CD8-positive, alpha-beta T cell (primary cell): ENCODE measurements at regions of chr6 and their contacts with region 1.

Region 1: GRCh38 chr6:70667711-70668498 is at the start of gene SMAP1:
- DNase-seq: peak; percentile 79 to 97 (median 93)
- ATAC-seq: peak; percentile 91
- H3K4me3 ChIP-seq: peak within 1 kb of the TSS; percentile 76 to 87
- H3K4me3 Mint-ChIP-seq: peak within 1 kb of the TSS; percentile 90
- H3K27ac ChIP-seq: peak within 1 kb of the TSS; percentile 53 to 75
- H3K27ac Mint-ChIP-seq: peak within 1 kb of the TSS; percentile 92
- H3K4me1 ChIP-seq: peaks cover 39% of the 10 kb centered on the region
- H3K4me1 Mint-ChIP-seq: peaks cover 53% of the 10 kb centered on the region
- H3K27me3 ChIP-seq: no peaks in the 10 kb centered on the region
- H3K27me3 Mint-ChIP-seq: no peaks in the 10 kb centered on the region
- CTCF ChIP-seq: no peak
- total RNA-seq, gene SMAP1: 21.2 to 21.8 TPM

Region 2: GRCh38 chr6:70566751-70567382 is 101.0 kb before region 1 on chr6 and contains the start of gene SDHAF4:
- CTCF ChIA-PET with region 1: no interaction called
- POLR2A ChIA-PET with region 1: interaction called, 11 read pairs
- intact Hi-C with region 1: loop called (anchors 1 kb)
- DNase-seq: peak; percentile 90 to 96 (median 95)
- ATAC-seq: peak; percentile 99
- H3K4me3 ChIP-seq: peak within 1 kb of the TSS; percentile 89 to 93
- H3K4me3 Mint-ChIP-seq: peak within 1 kb of the TSS; percentile 87
- H3K27ac ChIP-seq: peak within 1 kb of the TSS; percentile 61 to 82
- H3K27ac Mint-ChIP-seq: peak within 1 kb of the TSS; percentile 92
- H3K4me1 ChIP-seq: peaks cover 13% of the 10 kb centered on the region
- H3K4me1 Mint-ChIP-seq: peaks cover 24% of the 10 kb centered on the region
- H3K27me3 ChIP-seq: no peaks in the 10 kb centered on the region
- H3K27me3 Mint-ChIP-seq: no peaks in the 10 kb centered on the region
- CTCF ChIP-seq: no peak
- total RNA-seq, gene SDHAF4: 1.4 to 1.7 TPM

Region 3: GRCh38 chr6:70657706-70658105 is 10.2 kb before region 1 on chr6:
- CTCF ChIA-PET with region 1: no interaction called
- POLR2A ChIA-PET with region 1: interaction called, 3 read pairs
- intact Hi-C with region 1: loop called in 1 of 2 experiments (anchors 2 kb)
- DNase-seq: no peak
- ATAC-seq: no peak
- H3K4me3 ChIP-seq: no peak overlapping the region
- H3K4me3 Mint-ChIP-seq: no peak overlapping the region
- H3K27ac ChIP-seq: no peak overlapping the region
- H3K27ac Mint-ChIP-seq: no peak overlapping the region
- H3K4me1 ChIP-seq: no peaks in the 10 kb centered on the region
- H3K4me1 Mint-ChIP-seq: no peaks in the 10 kb centered on the region
- H3K27me3 ChIP-seq: no peaks in the 10 kb centered on the region
- H3K27me3 Mint-ChIP-seq: peaks cover 5% of the 10 kb centered on the region
- CTCF ChIP-seq: no peak